Uterus (tissue), 4 donors: ENCODE measurements at regions of chr12 and their contacts with region 1.

Region 1: GRCh38 chr12:26937875-26938700 is at the starts of genes FGFR1OP2 and INTS13:
- DNase-seq: peak; percentile 99
- H3K4me3 ChIP-seq: peak within 1 kb of the TSS; percentile 73 to 98
- H3K27ac ChIP-seq: peak within 1 kb of the TSS; percentile 98 to 99
- H3K4me1 ChIP-seq: no peaks in the 10 kb centered on the region
- H3K27me3 ChIP-seq: no peaks in the 10 kb centered on the region
- CTCF ChIP-seq: peak in 1 of 4 experiments; percentile 7
- POLR2A ChIP-seq: peak; percentile 96 to 97
- total RNA-seq, gene FGFR1OP2: 83.0 to 222 (median 112) TPM
- total RNA-seq, gene INTS13: 13.8 to 37.9 (median 26.8) TPM

Region 2: DNA sequence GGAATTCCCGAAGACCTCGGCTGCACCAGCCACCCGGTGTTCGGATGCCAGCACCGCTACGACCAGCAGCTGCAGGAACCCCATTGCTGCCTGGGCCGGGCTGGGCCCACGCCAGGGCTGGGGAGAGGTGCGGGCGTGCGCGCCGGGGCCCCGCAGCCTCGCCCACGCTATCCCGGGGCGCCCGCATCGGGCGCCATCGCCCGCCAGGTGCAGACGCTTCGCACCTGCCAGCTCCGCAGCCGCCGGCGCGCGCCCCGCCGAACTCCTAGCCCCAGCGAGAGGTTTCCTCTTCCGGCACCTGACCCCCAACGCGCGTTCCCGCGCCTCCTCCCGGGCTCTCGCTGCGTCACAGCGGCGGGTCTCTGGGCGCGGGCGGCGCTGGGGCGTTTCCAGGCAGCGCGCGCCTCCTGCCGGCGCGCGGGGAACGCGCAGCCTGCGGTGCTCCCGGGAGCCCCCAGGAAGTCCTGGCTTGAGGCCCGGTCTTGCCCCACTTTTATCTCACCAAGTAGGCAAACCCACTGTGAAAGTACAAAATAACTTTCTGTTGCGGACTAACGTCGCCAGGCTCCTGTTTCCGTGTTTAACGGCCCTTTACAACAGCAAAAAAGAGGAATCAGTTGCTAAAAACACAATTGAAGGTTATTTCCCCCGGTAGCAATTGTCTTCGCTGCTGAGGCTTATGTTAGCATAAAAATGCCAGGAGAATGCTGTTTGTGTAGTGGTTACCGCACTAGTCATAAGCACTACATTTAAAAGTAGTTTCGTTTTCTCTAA is 76.2 kb after region 1 on chr12 and contains the start of gene TM7SF3:
- intact Hi-C with region 1: loop called (anchors 5 kb)
- DNase-seq: peak; percentile 91 to 93
- H3K4me3 ChIP-seq: peak within 1 kb of the TSS; percentile 88 to 90
- H3K27ac ChIP-seq: peak within 1 kb of the TSS; percentile 94 to 97
- H3K4me1 ChIP-seq: no peaks in the 10 kb centered on the region
- H3K27me3 ChIP-seq: no peaks in the 10 kb centered on the region
- CTCF ChIP-seq: peak; percentile 84 to 97 (median 96)
- POLR2A ChIP-seq: peak; percentile 43 to 63
- total RNA-seq, gene TM7SF3: 32.8 to 70.6 (median 47.4) TPM